Posterior cingulate gyrus (tissue), 11 donors: ENCODE measurements at regions of chrX and their contacts with region 1.

Region 1: DNA sequence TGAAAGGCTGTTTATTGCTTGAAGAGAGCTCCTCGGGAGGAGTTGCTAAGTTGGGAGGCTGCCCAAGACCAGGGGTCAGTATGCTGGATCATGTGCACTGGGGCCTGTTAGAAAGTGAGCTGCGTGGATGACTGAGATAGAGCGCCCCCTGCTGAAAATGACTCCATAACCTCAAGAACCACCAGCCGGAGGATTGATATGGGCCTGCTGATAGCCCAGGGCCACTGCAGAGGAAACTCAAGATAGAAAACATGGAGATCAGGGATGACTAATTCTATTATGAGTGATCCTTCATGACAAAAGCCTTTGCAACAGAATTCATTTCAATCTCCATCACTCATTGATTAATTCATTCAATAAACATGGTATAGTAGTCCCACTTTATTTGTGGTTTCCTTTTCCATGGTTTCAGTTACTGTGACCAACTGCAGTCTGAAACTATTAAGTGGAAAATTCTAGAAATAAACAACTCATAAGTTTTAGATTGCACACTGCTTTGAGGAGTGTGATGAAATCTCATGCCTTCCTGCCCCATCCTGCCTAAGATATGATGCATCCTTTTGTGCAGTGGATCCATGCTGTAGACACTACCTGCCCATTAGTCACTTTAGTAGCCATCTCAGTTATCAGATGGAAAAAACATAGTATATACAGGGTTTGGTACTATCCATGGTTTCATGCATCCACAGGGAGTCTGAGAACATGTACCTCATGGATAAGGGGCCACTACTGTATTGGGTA is 126.7 kb upstream of the MBNL3 start:
- DNase-seq: peak in 4 of 10 donors; percentile 7 to 46 (median 26)

Region 2: DNA sequence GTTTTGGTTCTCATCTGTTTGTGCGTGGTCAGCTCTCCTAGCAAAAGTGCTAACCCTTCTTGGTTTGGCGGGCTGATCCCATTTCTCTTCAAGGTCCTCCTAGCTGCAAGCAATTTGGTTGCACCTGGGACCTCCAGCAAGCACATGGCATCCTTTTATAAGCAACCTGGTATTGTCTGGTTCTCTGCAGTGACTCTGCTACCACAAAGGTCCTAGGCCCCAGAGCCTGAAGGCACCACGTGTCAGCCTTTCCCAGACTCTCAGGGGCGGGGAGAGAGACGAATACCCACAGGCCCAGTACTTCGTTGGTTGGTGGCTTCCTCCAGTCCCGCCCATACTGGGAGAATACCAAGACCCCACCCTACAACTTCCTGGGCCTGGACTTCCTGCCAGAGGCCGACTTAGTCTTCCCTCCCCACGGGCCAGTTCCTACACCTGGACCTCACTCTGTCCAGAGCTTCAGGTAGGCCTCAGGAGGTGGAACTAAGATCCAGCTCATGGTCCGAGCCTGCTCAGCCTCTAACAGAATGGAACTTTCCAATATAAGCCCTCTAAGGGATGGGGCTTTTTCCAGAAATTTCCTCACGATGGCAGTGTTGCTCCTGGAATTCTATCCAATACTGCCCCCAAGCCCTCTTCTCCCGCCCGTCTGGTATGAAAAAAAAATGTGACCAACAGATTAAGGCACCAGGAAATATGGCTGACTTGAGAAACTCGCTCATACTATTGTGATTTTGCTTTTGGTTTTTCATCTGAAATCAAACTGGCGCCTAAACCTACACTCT is 785.0 kb before region 1 on chrX:
- intact Hi-C with region 1: loop called (anchors 5 kb)
- DNase-seq: peak in 8 of 10 donors; percentile 30 to 94 (median 60)

Region 3: DNA sequence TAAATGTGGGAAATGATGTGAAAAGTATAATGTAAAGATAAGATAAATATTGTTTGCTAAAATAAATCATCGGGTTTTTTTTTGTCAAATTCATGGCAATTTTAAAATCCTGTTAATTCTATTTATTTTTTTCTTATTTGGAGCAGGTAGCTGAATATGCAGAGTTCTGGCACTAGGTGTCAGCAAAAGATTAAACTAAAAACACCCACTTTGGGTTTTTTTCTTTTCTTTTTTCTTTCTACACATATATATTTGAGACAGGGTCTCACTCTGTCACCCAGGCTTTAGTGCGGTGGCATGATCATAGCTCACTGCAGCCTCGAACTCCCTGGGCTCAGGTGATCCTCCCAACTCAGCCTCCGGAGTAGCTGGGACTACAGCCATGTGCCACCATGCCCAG is 389.4 kb before region 1 on chrX:
- intact Hi-C with region 1: loop called (anchors 5 kb)
- DNase-seq: no peak

Region 4: DNA sequence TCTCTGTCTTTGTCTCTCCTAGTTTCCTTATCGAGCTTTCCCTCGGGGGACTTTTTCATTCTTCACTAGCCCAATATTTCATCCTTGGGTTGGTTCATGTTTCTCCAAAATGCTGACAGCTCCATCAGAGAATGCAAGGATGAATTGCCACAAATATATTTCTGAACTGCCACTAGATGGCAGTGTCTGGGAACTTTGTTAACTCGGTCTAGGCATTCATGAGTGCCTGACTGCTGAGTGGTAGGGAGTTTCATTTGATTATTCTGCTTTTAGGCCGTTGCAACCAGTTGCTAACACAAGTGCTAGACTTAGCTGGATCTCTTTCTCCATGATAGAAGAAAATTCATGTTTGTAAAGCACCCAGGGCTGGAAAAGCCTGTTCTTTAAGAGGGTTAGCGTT is 322.8 kb before region 1 on chrX:
- intact Hi-C with region 1: loop called (anchors 1 kb)
- DNase-seq: peak in 1 of 10 donors; percentile 28

Region 5: GRCh38 chrX:132353430-132353829 is 262.1 kb before region 1 on chrX:
- intact Hi-C with region 1: no loop called
- DNase-seq: no peak